ENCODE measurements at regions of chr17 and their contacts with region 1.

Region 1: DNA sequence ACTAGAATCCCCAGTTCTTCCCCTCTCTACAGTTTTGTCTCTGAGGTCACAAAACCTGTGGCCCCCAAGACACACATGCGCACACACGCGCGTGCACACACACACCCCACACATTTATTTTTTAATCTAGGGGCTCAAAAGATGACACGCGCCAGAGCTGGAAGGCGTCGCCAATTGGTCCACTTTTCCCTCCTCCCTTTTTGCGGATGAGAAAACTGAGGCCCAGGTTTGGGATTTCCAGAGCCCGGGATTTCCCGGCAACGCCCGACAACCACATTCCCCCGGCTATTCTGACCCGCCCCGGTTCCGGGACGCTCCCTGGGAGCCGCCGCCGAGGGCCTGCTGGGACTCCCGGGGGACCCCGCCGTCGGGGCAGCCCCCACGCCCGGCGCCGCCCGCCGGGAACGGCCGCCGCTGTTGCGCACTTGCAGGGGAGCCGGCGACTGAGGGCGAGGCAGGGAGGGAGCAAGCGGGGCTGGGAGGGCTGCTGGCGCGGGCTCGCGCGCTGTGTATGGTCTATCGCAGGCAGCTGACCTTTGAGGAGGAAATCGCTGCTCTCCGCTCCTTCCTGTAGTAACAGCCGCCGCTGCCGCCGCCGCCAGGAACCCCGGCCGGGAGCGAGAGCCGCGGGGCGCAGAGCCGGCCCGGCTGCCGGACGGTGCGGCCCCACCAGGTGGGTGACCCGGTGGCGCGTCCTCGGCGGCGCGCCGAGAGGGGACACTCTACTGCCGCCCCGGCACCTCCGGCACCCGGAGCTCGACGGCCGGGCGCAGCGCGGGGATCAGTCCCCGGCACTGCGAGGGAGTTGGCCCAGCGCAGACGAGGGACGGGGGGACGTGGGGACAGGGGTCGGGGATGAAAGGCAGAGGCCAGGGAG is at the start of gene STAT5A:
- DNase-seq: peak; percentile 95
- H3K4me3 Mint-ChIP-seq: peak within 1 kb of the TSS; percentile 89
- H3K27ac Mint-ChIP-seq: peak within 1 kb of the TSS; percentile 92
- H3K4me1 Mint-ChIP-seq: peaks cover 46% of the 10 kb centered on the region
- H3K27me3 Mint-ChIP-seq: no peaks in the 10 kb centered on the region
- total RNA-seq, gene STAT5A: 346 and 348 TPM in 2 replicates

Region 2: GRCh38 chr17:42221937-42222745 is 66.0 kb before region 1 on chr17:
- intact Hi-C with region 1: loop called (anchors 1 kb)
- DNase-seq: peak; percentile 85
- H3K4me3 Mint-ChIP-seq: no peak overlapping the region
- H3K27ac Mint-ChIP-seq: peak overlapping the region; percentile 27
- H3K4me1 Mint-ChIP-seq: peaks cover 7% of the 10 kb centered on the region
- H3K27me3 Mint-ChIP-seq: no peaks in the 10 kb centered on the region

Region 3: GRCh38 chr17:42243493-42243996 is 44.6 kb before region 1 on chr17:
- intact Hi-C with region 1: no loop called
- DNase-seq: no peak
- H3K4me3 Mint-ChIP-seq: no peak overlapping the region
- H3K27ac Mint-ChIP-seq: no peak overlapping the region
- H3K4me1 Mint-ChIP-seq: peaks cover 36% of the 10 kb centered on the region
- H3K27me3 Mint-ChIP-seq: no peaks in the 10 kb centered on the region

Region 4: GRCh38 chr17:42266918-42267778 is 21.0 kb before region 1 on chr17:
- intact Hi-C with region 1: loop called (anchors 1 kb)
- DNase-seq: peak; percentile 85
- H3K4me3 Mint-ChIP-seq: peak overlapping the region; percentile 76
- H3K27ac Mint-ChIP-seq: peak overlapping the region; percentile 98
- H3K4me1 Mint-ChIP-seq: peaks cover 52% of the 10 kb centered on the region
- H3K27me3 Mint-ChIP-seq: no peaks in the 10 kb centered on the region

Region 5: DNA sequence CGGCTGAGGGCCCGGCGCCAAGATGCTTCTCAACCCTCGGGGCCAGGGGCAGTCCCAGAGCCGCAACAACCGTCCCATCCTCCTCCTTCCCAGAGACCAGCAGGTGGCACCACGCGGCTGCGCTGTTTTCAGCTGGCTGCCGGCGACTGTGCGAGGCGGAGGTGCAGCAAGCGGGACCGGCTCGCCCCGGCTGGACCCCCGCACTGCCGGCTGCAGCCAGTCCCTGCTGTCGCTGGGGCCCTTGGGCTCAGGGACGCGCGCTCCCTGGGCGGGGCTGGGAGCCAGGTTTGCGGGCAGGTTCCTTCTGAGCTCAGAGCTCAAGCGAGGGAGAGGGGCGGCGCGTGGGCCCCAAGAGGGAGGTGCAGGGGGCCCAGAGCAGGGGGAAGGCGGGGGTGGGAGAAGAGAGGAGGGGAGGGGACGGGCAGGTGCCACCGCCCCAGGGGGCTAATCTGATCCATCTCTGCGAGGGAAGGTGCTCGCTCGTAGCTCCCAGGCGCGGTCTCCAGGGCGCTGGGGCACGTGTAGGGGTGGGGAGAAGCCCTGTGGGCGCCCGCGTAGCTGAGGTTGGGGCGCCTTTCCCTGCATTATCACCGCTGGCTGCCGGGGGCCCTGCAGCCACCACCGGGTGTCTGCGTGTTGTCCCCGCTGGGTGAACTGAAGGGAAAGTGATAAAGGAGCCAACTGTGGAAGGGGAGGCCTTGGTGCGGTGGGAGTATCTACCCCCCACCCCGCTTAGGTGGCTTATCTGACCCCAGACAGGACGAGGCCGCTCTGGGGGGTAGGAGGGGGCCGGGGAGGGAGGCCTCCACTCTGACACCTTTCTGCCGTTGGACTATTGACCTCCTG is 24.3 kb after region 1 on chr17:
- intact Hi-C with region 1: loop called (anchors 1 kb)
- DNase-seq: peak; percentile 93
- H3K4me3 Mint-ChIP-seq: peak overlapping the region; percentile 81
- H3K27ac Mint-ChIP-seq: peak overlapping the region; percentile 77
- H3K4me1 Mint-ChIP-seq: peaks cover 63% of the 10 kb centered on the region
- H3K27me3 Mint-ChIP-seq: no peaks in the 10 kb centered on the region

Region 6: GRCh38 chr17:42536048-42536371 is 247.8 kb after region 1 on chr17 and contains the start of gene NAGLU:
- intact Hi-C with region 1: no loop called
- DNase-seq: peak; percentile 96
- H3K4me3 Mint-ChIP-seq: peak within 1 kb of the TSS; percentile 91
- H3K27ac Mint-ChIP-seq: peak within 1 kb of the TSS; percentile 84
- H3K4me1 Mint-ChIP-seq: peaks cover 34% of the 10 kb centered on the region
- H3K27me3 Mint-ChIP-seq: peaks cover 10% of the 10 kb centered on the region
- total RNA-seq, gene NAGLU: 20.4 and 20.7 TPM in 2 replicates

Region 7: DNA sequence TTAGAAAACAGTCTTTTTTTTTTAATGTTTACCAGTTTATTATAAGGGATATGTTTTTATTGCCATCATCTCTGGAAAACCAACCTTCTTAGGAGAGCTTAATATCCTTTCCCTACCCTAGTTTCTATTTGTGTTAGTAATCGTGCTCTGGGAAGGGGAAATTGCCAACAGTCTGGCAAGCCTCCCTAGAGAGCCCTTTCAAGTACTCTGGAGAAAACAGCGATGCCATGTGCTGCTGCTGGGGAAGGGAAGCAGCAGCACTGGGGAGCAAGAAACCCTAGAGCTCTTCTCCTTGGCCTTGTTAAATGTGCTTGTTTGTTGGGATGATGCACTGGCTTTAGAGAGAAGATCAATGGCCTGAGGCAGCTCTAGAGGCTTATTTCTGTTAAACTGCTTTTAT is 310.7 kb after region 1 on chr17:
- intact Hi-C with region 1: no loop called
- DNase-seq: no peak
- H3K4me3 Mint-ChIP-seq: no peak overlapping the region
- H3K27ac Mint-ChIP-seq: no peak overlapping the region
- H3K4me1 Mint-ChIP-seq: peaks cover 3% of the 10 kb centered on the region
- H3K27me3 Mint-ChIP-seq: no peaks in the 10 kb centered on the region